Activated CD4-positive, alpha-beta memory T cell treated with anti-CD3 and anti-CD28 coated beads for 36 hours (primary cell): ENCODE measurements at regions of chrX and their contacts with region 1.

Region 1: GRCh38 chrX:20594985-20595384 is 328.3 kb upstream of the RPS6KA3 start:
- DNase-seq: no peak
- H3K4me3 Mint-ChIP-seq: no peak overlapping the region
- H3K27ac Mint-ChIP-seq: no peak overlapping the region
- H3K4me1 Mint-ChIP-seq: peaks cover 16% of the 10 kb centered on the region
- H3K27me3 Mint-ChIP-seq: peaks cover 3% of the 10 kb centered on the region

Region 2: GRCh38 chrX:20452487-20452886 is 142.5 kb before region 1 on chrX:
- CTCF ChIA-PET with region 1: no interaction called
- POLR2A ChIA-PET with region 1: no interaction called
- intact Hi-C with region 1: loop called (anchors 5 kb)
- DNase-seq: no peak
- H3K4me3 Mint-ChIP-seq: peak overlapping the region; percentile 12
- H3K27ac Mint-ChIP-seq: peak overlapping the region; percentile 18
- H3K4me1 Mint-ChIP-seq: peaks cover 32% of the 10 kb centered on the region
- H3K27me3 Mint-ChIP-seq: no peaks in the 10 kb centered on the region

Region 3: DNA sequence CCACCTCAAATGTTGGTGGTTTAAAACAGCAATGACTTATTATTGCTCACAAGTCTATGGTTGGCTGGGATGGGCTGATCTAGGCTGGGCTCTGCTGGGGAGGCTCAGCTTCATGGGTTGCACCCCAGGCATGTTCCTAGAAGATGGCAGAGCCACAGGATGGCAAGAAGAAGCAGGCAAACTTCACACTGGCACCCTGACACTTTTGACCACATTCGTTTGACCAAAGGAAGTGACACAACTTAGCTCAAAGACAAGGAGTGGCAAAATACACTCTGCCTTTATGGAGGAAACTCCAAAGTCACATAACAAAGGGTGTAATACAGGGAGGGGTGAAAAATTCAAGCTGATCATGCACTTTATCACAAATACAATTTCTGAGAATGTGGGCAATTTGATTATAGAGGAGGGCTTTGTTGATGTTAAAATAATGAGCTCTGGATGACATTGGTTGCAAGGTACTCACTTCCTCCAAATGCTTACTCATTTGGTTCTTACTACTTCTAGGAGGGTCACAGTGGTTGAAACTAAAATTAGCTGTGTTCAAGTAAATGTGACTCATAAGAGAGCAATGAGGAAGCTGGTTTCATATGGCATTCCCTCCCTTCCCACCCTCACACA is 79.0 kb before region 1 on chrX:
- CTCF ChIA-PET with region 1: no interaction called
- POLR2A ChIA-PET with region 1: interaction called, 3 read pairs
- intact Hi-C with region 1: loop called (anchors 1 kb)
- DNase-seq: peak; percentile 37
- H3K4me3 Mint-ChIP-seq: no peak overlapping the region
- H3K27ac Mint-ChIP-seq: peak overlapping the region; percentile 58
- H3K4me1 Mint-ChIP-seq: peaks cover 34% of the 10 kb centered on the region
- H3K27me3 Mint-ChIP-seq: peaks cover 13% of the 10 kb centered on the region

Region 4: DNA sequence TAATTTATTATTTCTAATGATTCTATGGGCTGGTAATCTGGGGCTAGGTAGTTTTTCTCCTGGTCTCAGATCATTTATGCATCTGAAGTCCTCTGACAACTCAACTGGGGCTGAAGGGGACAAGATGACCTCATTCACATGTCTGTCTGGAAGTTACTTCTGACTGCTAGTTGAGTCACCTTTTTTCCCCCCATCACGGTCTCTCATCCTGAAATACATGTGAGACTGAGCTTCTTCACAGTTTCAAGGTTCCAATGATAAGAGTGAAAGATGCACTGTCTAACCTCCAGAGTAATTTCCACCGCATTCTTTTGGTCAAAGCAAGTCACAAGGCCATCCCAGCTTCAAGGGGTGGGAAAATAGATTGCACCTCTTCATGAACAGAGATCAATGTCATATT is 28.5 kb after region 1 on chrX:
- CTCF ChIA-PET with region 1: no interaction called
- POLR2A ChIA-PET with region 1: no interaction called
- intact Hi-C with region 1: loop called (anchors 2 kb)
- DNase-seq: peak; percentile 8
- H3K4me3 Mint-ChIP-seq: no peak overlapping the region
- H3K27ac Mint-ChIP-seq: no peak overlapping the region
- H3K4me1 Mint-ChIP-seq: peaks cover 4% of the 10 kb centered on the region
- H3K27me3 Mint-ChIP-seq: peaks cover 3% of the 10 kb centered on the region

Region 5: GRCh38 chrX:21374163-21374993 is 779.4 kb after region 1 on chrX and contains the start of gene CNKSR2:
- CTCF ChIA-PET with region 1: no interaction called
- POLR2A ChIA-PET with region 1: no interaction called
- intact Hi-C with region 1: loop called (anchors 10 kb)
- DNase-seq: peak; percentile 70
- H3K4me3 Mint-ChIP-seq: peak within 1 kb of the TSS; percentile 84
- H3K27ac Mint-ChIP-seq: no peak within 1 kb of the TSS
- H3K4me1 Mint-ChIP-seq: peaks cover 25% of the 10 kb centered on the region
- H3K27me3 Mint-ChIP-seq: no peaks in the 10 kb centered on the region
- total RNA-seq, gene CNKSR2: 3.6 to 3.7 TPM